HepG2 (cell line): ENCODE measurements at regions of chr2 and their contacts with region 1.

Region 1: GRCh38 chr2:48343571-48344440 is 186.1 kb upstream of the STON1 start:
- DNase-seq: peak; percentile 87
- ATAC-seq: peak; percentile 73
- H3K4me3 ChIP-seq: peak overlapping the region; percentile 24 to 57 (median 53); a peak in 5 of 6 replicates
- H3K27ac ChIP-seq: peak overlapping the region; percentile 77
- H3K4me1 ChIP-seq: peaks cover 56% of the 10 kb centered on the region
- H3K27me3 ChIP-seq: no peaks in the 10 kb centered on the region
- CTCF ChIP-seq: no peak
- EP300 ChIP-seq: peak in 1 of 2 experiments; percentile 72; a peak in 2 of 4 replicates
- POLR2A ChIP-seq: no peak
- RAD21 ChIP-seq: no peak

Region 2: DNA sequence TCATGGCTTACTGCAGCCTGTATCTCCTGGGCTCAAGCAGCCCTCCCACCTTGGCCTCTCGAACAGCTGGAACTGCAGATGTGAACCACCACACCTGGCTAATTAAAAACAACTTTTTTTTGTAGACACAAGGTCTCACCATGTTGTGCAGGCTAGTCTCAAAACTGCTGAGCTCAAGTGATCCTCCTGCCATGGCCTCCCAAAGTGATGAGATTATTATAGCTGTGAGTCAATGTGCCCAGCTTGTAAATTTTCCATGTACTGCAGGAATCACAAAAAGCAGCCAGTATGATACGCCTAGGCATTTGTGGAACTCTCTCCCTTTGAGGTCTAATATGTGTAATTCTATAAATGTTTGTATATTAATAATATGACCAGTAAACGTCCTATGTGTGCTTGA is 501.0 kb before region 1 on chr2:
- CTCF ChIA-PET with region 1: no interaction called
- POLR2A ChIA-PET with region 1: no interaction called
- in situ Hi-C with region 1: no loop called
- intact Hi-C with region 1: no loop called
- DNase-seq: no peak
- ATAC-seq: no peak
- H3K4me3 ChIP-seq: no peak overlapping the region
- H3K27ac ChIP-seq: no peak overlapping the region
- H3K4me1 ChIP-seq: no peaks in the 10 kb centered on the region
- H3K27me3 ChIP-seq: no peaks in the 10 kb centered on the region
- CTCF ChIP-seq: no peak
- EP300 ChIP-seq: no peak
- POLR2A ChIP-seq: no peak
- RAD21 ChIP-seq: no peak

Region 3: DNA sequence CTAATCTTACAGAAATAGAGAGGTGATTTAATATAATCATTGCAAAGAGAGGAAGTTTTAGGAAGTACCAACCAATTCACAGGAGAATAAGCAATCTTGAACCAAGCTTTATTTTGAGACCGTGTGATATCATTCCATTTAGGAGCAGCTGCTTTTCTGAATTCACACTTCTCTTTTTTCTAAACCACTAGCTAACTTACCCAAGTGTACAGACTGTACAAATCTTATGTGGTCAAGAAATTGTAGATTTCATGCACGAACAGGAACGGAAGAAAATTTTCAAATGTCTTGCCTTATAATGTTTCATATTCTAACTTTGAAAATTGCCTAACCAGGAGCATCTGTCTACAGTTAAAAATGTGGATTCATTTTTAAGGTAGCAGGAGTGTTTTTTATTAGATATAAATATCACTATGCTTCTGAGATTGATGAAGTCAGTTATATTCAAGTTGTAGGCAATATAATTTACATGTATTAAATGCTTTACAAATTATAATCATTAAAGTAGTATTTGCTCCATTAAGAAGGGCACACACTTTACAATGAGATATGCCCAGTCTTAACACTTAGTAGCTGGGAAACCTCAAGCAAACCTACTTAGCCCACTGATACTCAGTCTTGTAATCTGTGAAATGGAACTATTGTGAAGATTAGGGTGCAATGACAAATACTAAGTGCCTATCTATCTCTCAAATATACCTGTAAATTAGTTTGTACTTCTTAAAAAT is 116.0 kb before region 1 on chr2:
- CTCF ChIA-PET with region 1: no interaction called
- POLR2A ChIA-PET with region 1: no interaction called
- in situ Hi-C with region 1: no loop called
- intact Hi-C with region 1: loop called (anchors 10 kb)
- DNase-seq: no peak
- ATAC-seq: no peak
- H3K4me3 ChIP-seq: no peak overlapping the region
- H3K27ac ChIP-seq: no peak overlapping the region
- H3K4me1 ChIP-seq: peaks cover 33% of the 10 kb centered on the region
- H3K27me3 ChIP-seq: no peaks in the 10 kb centered on the region
- CTCF ChIP-seq: no peak
- EP300 ChIP-seq: no peak
- POLR2A ChIP-seq: no peak
- RAD21 ChIP-seq: no peak

Region 4: DNA sequence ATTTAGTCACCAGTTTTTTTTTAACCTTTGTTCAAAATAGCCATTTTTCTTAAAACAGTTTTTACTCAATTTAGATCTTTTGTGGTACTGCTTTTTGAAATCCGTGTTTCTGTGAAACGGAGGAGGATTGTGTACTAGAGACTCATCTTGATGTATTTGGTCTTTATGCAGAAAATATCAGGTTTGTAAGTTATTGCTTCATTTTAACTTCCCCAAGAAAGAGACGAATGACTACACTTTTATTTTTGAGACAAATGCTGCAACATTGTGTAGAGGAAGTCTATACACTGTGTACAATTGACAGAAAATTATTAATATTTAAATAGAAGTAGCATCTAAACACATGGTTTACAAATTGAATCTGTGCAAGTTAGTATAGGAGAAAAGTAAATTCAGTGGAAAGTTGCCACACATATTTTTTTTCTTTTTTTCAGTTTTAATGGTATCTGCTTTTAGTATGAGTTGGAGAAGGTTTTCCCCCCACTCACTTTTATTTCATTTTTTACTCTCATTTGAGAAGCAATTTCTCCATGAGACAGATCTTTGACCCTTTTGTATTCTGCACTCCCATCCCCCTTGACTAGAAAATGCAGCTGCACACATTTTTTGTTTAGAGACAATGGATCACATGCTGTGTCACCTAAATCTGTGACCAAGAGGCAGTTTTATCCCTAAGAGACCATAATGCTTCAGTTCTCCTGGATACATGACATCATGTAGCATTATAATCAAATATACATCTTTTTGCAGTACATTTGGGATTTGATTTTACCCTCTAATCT is 14.7 kb before region 1 on chr2:
- CTCF ChIA-PET with region 1: no interaction called
- POLR2A ChIA-PET with region 1: no interaction called
- in situ Hi-C with region 1: no loop called
- intact Hi-C with region 1: loop called (anchors 1 kb)
- DNase-seq: peak; percentile 45
- ATAC-seq: peak; percentile 38; the same call in 1 of the 3 replicates
- H3K4me3 ChIP-seq: 0 out of 6 replicates have a peak overlapping the region, but pooled peaks of 1 of the 3 experiments have one; percentile 1
- H3K27ac ChIP-seq: peak overlapping the region; percentile 14
- H3K4me1 ChIP-seq: peaks cover 51% of the 10 kb centered on the region
- H3K27me3 ChIP-seq: no peaks in the 10 kb centered on the region
- CTCF ChIP-seq: no peak
- EP300 ChIP-seq: 0 out of 4 replicates have a peak, but pooled peaks of 1 of the 2 experiments have one; percentile 9
- POLR2A ChIP-seq: no peak
- RAD21 ChIP-seq: no peak

Region 5: GRCh38 chr2:48383046-48383445 is 39.2 kb after region 1 on chr2:
- CTCF ChIA-PET with region 1: no interaction called
- POLR2A ChIA-PET with region 1: no interaction called
- in situ Hi-C with region 1: no loop called
- intact Hi-C with region 1: no loop called
- DNase-seq: no peak
- ATAC-seq: peak; percentile 32; the same call in 2 of the 3 replicates
- H3K4me3 ChIP-seq: no peak overlapping the region
- H3K27ac ChIP-seq: no peak overlapping the region
- H3K4me1 ChIP-seq: no peaks in the 10 kb centered on the region
- H3K27me3 ChIP-seq: no peaks in the 10 kb centered on the region; a peak in 1 of 5 replicates
- CTCF ChIP-seq: no peak
- EP300 ChIP-seq: no peak
- POLR2A ChIP-seq: no peak
- RAD21 ChIP-seq: no peak